CD4-positive, alpha-beta memory T cell (primary cell): ENCODE measurements at regions of chr4 and their contacts with region 1.

Region 1: DNA sequence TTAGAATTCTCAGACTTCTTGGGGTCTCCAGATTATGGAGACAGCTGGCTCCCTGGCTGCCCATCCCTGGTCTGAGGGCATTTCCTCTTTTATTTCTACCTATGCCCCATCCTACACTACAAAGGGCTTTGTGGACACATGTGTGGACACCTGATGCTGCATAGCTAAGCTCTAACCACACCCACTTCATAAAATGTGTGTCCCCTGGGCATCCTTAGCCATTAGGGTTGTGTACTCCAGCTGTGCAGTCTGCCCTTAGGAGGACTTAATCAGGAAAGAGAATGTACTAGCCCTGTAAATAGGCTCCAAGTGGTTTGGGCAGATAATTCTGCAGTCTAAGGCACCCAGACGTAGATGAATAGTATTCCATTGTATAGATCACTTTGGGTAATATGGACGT is 47.0 kb downstream of the COQ2 start:
- DNase-seq: no peak
- H3K4me3 ChIP-seq: no peak overlapping the region
- H3K4me3 Mint-ChIP-seq: peak overlapping the region in 1 of 8 donors; percentile 12
- H3K27ac ChIP-seq: no peak overlapping the region
- H3K27ac Mint-ChIP-seq: no peak overlapping the region
- H3K4me1 ChIP-seq: peaks cover 41% of the 10 kb centered on the region
- H3K4me1 Mint-ChIP-seq: peaks cover 38 to 60% (median 49%) of the 10 kb centered on the region in 4 donors
- H3K27me3 ChIP-seq: no peaks in the 10 kb centered on the region
- H3K27me3 Mint-ChIP-seq: peaks cover 0 to 2% of the 10 kb centered on the region in 2 donors

Region 2: GRCh38 chr4:83093130-83093529 is 144.5 kb before region 1 on chr4:
- CTCF ChIA-PET with region 1: no interaction called
- POLR2A ChIA-PET with region 1: no interaction called
- intact Hi-C with region 1: no loop called
- DNase-seq: no peak
- H3K4me3 ChIP-seq: no peak overlapping the region
- H3K4me3 Mint-ChIP-seq: no peak overlapping the region
- H3K27ac ChIP-seq: no peak overlapping the region
- H3K27ac Mint-ChIP-seq: peak overlapping the region in 6 of 7 donors; percentile 17 to 79 (median 34)
- H3K4me1 ChIP-seq: peaks cover 15% of the 10 kb centered on the region
- H3K4me1 Mint-ChIP-seq: peaks cover 21 to 52% (median 35%) of the 10 kb centered on the region in 4 donors
- H3K27me3 ChIP-seq: no peaks in the 10 kb centered on the region
- H3K27me3 Mint-ChIP-seq: no peaks in the 10 kb centered on the region

Region 3: DNA sequence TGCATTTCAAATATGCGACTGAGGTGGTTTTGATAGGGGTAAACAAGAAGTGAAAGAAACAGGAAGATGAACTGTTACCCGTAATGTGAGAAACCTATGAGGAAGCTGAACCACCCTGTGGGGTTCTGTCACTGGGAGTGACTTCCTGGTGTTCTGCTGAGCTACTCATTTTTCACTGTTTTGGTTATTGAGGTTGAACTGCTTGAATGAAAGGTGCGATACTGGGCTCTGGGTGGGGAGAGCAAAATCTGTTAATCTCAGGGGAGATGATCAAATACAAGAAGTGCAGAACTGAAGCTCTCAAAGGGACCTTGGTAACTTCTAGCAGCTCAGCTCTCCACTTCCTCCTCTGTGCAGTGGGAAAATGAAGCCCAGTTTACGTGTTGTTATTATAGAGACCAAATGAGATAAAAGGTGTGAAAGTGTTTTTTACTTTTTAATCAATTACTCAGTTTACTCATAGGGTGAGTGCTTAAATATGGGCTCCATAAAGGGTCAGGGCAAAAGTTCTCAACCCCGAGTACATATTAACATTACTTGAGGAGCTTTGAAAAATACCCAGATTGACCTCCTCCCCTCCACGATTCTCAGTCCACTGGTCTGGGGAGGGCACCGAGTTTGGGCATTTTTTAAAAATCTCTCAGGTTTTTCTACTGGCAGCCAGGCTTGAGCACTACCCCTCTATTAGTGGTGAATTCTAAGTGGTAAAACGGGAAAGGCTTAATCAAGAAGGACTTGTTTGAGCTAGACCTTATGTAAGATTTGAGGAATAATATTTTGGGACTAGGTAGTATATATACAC is 19.7 kb before region 1 on chr4:
- CTCF ChIA-PET with region 1: interaction called, 3 read pairs
- POLR2A ChIA-PET with region 1: interaction called, 4 read pairs
- intact Hi-C with region 1: loop called (anchors 1 kb)
- DNase-seq: peak; percentile 82 to 91 (median 86)
- H3K4me3 ChIP-seq: peak overlapping the region in 1 of 2 donors; percentile 9
- H3K4me3 Mint-ChIP-seq: peak overlapping the region; percentile 55 to 77 (median 70)
- H3K27ac ChIP-seq: peak overlapping the region; percentile 64
- H3K27ac Mint-ChIP-seq: peak overlapping the region; percentile 77 to 94 (median 91)
- H3K4me1 ChIP-seq: peaks cover 85% of the 10 kb centered on the region
- H3K4me1 Mint-ChIP-seq: peaks cover 58 to 85% (median 71%) of the 10 kb centered on the region in 4 donors
- H3K27me3 ChIP-seq: no peaks in the 10 kb centered on the region
- H3K27me3 Mint-ChIP-seq: no peaks in the 10 kb centered on the region

Region 4: GRCh38 chr4:83316459-83317165 is 79.0 kb after region 1 on chr4:
- CTCF ChIA-PET with region 1: no interaction called
- POLR2A ChIA-PET with region 1: no interaction called
- intact Hi-C with region 1: no loop called
- DNase-seq: no peak
- H3K4me3 ChIP-seq: no peak overlapping the region
- H3K4me3 Mint-ChIP-seq: no peak overlapping the region
- H3K27ac ChIP-seq: no peak overlapping the region
- H3K27ac Mint-ChIP-seq: peak overlapping the region in 1 of 7 donors; percentile 48
- H3K4me1 ChIP-seq: no peaks in the 10 kb centered on the region
- H3K4me1 Mint-ChIP-seq: peaks cover 0 to 5% (median 4%) of the 10 kb centered on the region in 4 donors
- H3K27me3 ChIP-seq: no peaks in the 10 kb centered on the region
- H3K27me3 Mint-ChIP-seq: no peaks in the 10 kb centered on the region